ENCODE measurements at regions of chr3 and their contacts with region 1.

Region 1: GRCh38 chr3:31077021-31077601 is 182.7 kb upstream of the GADL1 start:
- DNase-seq: peak; percentile 89
- H3K4me3 ChIP-seq: no peak overlapping the region
- H3K27ac ChIP-seq: peak overlapping the region; percentile 66
- H3K4me1 ChIP-seq: peaks cover 21% of the 10 kb centered on the region
- H3K27me3 ChIP-seq: no peaks in the 10 kb centered on the region
- CTCF ChIP-seq: no peak
- POLR2A ChIP-seq: no peak

Region 2: DNA sequence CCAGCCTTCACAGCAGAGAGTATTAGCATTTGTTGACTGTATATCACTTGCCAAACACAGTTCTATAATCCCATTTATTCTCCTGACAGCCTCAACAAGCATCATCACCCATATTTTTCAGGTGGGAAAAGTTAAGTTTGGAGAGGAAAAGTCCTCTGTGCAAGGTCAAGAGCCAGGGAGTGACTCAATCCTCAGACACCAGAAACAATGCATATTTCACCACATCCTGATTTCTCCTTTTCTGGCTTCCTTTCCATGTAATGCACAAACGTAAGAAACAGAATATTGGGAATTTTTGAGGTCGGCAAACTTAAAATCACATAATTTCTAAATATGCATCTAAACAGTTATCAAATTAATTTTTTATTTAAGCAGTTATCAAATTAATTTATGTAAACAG is 66.6 kb before region 1 on chr3:
- CTCF ChIA-PET with region 1: interaction called, 3 read pairs
- POLR2A ChIA-PET with region 1: interaction called, 3 read pairs
- dilution Hi-C with region 1: no loop called
- intact Hi-C with region 1: loop called (anchors 2 kb)
- DNase-seq: peak; percentile 77
- H3K4me3 ChIP-seq: no peak overlapping the region
- H3K27ac ChIP-seq: peak overlapping the region; percentile 70
- H3K4me1 ChIP-seq: peaks cover 42% of the 10 kb centered on the region
- H3K27me3 ChIP-seq: no peaks in the 10 kb centered on the region
- CTCF ChIP-seq: no peak
- POLR2A ChIP-seq: no peak

Region 3: GRCh38 chr3:31105438-31106077 is 28.4 kb after region 1 on chr3:
- CTCF ChIA-PET with region 1: interaction called, 3 read pairs
- POLR2A ChIA-PET with region 1: no interaction called
- dilution Hi-C with region 1: no loop called
- intact Hi-C with region 1: loop called (anchors 1 kb)
- DNase-seq: peak; percentile 76
- H3K4me3 ChIP-seq: no peak overlapping the region
- H3K27ac ChIP-seq: peak overlapping the region; percentile 55
- H3K4me1 ChIP-seq: peaks cover 19% of the 10 kb centered on the region
- H3K27me3 ChIP-seq: no peaks in the 10 kb centered on the region
- CTCF ChIP-seq: no peak
- POLR2A ChIP-seq: no peak

Region 4: GRCh38 chr3:31242026-31242960 is 165.2 kb after region 1 on chr3:
- CTCF ChIA-PET with region 1: no interaction called
- POLR2A ChIA-PET with region 1: no interaction called
- dilution Hi-C with region 1: no loop called
- intact Hi-C with region 1: no loop called
- DNase-seq: no peak
- H3K4me3 ChIP-seq: no peak overlapping the region
- H3K27ac ChIP-seq: no peak overlapping the region
- H3K4me1 ChIP-seq: no peaks in the 10 kb centered on the region
- H3K27me3 ChIP-seq: peaks cover 2 to 4% of the 10 kb centered on the region in 2 experiments
- CTCF ChIP-seq: no peak
- POLR2A ChIP-seq: no peak